ENCODE measurements at regions of chr5 and their contacts with region 1.

Region 1: DNA sequence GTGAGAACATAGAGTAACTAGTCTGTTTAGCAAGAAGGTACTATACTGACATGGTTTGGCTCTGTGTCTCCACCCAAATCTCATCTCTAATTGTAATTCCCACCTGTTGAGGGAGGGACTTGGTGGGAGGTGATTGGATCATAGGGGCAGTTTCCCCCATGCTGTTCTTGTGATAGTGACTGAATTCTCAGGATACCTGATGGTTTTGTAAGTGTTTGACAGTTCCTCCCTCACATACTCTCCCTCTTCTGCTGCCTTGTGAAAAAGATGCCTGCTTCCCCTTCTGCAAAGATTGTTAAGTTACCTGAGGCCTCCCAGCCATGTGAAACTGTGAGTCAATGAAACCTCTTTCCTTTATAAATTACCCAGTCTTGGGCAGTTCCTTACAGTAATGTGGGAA is 240.4 kb upstream of the ST8SIA4 start:
- DNase-seq: no peak
- H3K4me3 ChIP-seq: no peak overlapping the region
- H3K27ac ChIP-seq: no peak overlapping the region
- H3K27me3 ChIP-seq: no peaks in the 10 kb centered on the region
- CTCF ChIP-seq: no peak

Region 2: GRCh38 chr5:101370181-101370580 is 226.7 kb after region 1 on chr5:
- intact Hi-C with region 1: loop called in 1 of 2 experiments (anchors 5 kb)
- DNase-seq: no peak
- H3K4me3 ChIP-seq: peak overlapping the region in 2 of 59 donors; percentile 8 to 16
- H3K27ac ChIP-seq: no peak overlapping the region
- H3K27me3 ChIP-seq: no peaks in the 10 kb centered on the region
- CTCF ChIP-seq: no peak